Activated CD4-positive, alpha-beta memory T cell treated with anti-CD3 and anti-CD28 coated beads for 36 hours (primary cell): ENCODE measurements at regions of chr14 and their contacts with region 1.

Region 1: GRCh38 chr14:76918751-76919543 is 92.7 kb downstream of the LRRC74A start:
- DNase-seq: peak; percentile 31
- H3K4me3 Mint-ChIP-seq: no peak overlapping the region
- H3K27ac Mint-ChIP-seq: no peak overlapping the region
- H3K4me1 Mint-ChIP-seq: peaks cover 33% of the 10 kb centered on the region
- H3K27me3 Mint-ChIP-seq: no peaks in the 10 kb centered on the region

Region 2: GRCh38 chr14:76793956-76794355 is 125.0 kb before region 1 on chr14:
- CTCF ChIA-PET with region 1: no interaction called
- POLR2A ChIA-PET with region 1: no interaction called
- intact Hi-C with region 1: no loop called
- DNase-seq: no peak
- H3K4me3 Mint-ChIP-seq: no peak overlapping the region
- H3K27ac Mint-ChIP-seq: no peak overlapping the region
- H3K4me1 Mint-ChIP-seq: no peaks in the 10 kb centered on the region
- H3K27me3 Mint-ChIP-seq: no peaks in the 10 kb centered on the region

Region 3: DNA sequence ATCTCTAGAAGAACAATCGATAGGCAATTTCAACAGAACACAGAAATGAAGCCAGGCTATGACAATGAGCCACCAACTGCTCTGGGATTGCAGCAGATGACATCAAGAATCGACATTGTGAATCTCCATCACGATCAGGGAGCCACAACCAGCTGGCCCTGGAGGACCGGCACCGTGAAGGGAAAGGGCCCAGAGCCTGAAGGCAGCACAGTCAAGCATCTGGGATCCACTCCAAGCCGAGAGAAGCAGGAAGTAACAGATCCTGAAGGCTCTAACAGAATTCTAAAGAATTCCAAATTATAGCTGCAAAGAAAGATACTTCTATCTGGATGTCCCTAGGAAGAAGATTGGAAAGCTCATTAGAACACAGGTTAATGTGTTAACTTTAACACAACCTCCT is 31.8 kb before region 1 on chr14:
- CTCF ChIA-PET with region 1: interaction called, 10 read pairs
- POLR2A ChIA-PET with region 1: no interaction called
- intact Hi-C with region 1: no loop called
- DNase-seq: no peak
- H3K4me3 Mint-ChIP-seq: no peak overlapping the region
- H3K27ac Mint-ChIP-seq: no peak overlapping the region
- H3K4me1 Mint-ChIP-seq: no peaks in the 10 kb centered on the region
- H3K27me3 Mint-ChIP-seq: peaks cover 1% of the 10 kb centered on the region

Region 4: GRCh38 chr14:76941946-76942805 is 23.2 kb after region 1 on chr14:
- CTCF ChIA-PET with region 1: interaction called, 20 read pairs
- POLR2A ChIA-PET with region 1: no interaction called
- intact Hi-C with region 1: no loop called
- DNase-seq: peak; percentile 50
- H3K4me3 Mint-ChIP-seq: no peak overlapping the region
- H3K27ac Mint-ChIP-seq: peak overlapping the region; percentile 67
- H3K4me1 Mint-ChIP-seq: peaks cover 24% of the 10 kb centered on the region
- H3K27me3 Mint-ChIP-seq: no peaks in the 10 kb centered on the region

Region 5: DNA sequence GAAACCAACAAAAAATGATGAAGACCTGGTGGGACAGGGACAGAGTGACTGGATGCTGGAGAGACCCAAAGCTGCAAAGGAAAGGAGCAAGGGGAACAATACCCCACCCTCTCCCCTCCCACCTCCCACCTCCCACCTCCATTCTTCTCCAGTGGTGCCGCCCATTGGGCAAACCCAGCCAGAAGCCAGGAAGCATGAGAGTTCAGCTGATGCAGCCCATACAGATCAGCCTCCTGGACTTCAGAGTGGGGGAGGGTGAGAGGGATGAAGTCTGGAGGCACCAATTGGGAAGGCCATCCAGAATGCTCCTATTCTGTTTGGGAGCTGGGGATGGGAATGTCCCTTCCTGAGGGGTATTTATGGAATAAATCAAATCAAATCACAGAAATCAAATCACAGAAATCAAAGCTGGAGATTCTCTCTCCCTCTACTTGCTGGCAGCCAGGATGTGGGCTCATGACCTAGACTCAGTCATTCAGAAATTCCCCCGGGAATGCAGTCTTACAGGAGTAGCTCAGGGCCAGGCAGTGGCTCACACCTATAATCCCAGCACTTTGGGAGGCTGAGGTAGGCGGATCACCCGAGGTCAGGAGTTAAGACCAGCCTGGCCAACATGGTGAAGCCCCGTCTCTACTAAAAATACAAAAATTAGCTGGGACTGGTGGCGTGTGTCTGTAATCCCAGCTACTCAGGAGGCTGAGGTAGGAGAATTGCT is 78.5 kb after region 1 on chr14:
- CTCF ChIA-PET with region 1: no interaction called
- POLR2A ChIA-PET with region 1: no interaction called
- intact Hi-C with region 1: no loop called
- DNase-seq: no peak
- H3K4me3 Mint-ChIP-seq: no peak overlapping the region
- H3K27ac Mint-ChIP-seq: no peak overlapping the region
- H3K4me1 Mint-ChIP-seq: peaks cover 19% of the 10 kb centered on the region
- H3K27me3 Mint-ChIP-seq: no peaks in the 10 kb centered on the region

Region 6: DNA sequence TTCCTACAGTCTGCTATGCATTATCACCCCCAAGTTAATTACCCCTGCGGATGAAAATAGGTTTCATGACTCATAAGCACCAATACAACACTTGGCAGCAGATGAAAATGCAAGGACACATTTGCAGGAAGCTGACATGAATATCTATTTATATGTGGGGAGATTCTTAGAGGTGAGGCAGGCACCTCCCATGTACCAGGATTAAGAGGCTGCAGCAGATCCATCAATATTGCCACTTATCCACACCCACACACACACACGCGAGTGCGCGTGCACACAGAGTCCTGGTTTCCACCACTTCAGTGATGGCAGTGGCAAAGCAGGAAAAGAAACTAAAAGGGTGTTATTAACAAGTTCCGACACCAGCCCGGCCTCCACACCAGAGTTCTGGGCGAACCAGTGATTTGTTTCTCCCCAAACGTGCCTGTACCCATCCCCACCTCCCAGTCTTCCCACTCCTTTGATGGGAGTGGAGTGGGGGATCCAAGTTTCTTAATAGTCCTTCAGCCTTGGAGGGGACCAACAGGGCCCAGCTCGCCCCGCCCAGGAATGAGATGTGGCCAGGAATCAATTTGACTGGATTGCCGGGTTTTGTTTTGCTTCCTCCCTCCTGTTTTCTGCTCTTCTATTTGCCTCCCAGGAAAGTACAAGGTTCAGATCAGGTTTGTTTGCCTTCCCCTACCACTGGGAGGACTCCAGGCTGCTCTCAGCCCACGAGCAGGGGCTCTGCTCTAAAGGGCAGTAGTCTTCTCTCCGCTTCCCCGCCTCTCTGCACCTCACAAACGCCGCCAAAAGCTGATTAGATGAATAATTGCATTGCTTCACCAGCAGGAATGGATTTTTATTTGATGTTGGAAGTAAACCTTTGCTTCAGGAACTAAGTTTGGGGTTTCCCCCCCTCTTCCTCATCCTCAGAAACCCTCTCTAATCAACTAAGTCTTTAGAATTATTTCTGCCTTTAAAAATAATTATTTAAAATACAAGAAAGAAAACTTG is 104.4 kb after region 1 on chr14:
- CTCF ChIA-PET with region 1: interaction called, 37 read pairs
- POLR2A ChIA-PET with region 1: interaction called, 3 read pairs
- intact Hi-C with region 1: no loop called
- DNase-seq: peak; percentile 79
- H3K4me3 Mint-ChIP-seq: peak overlapping the region; percentile 58
- H3K27ac Mint-ChIP-seq: peak overlapping the region; percentile 87
- H3K4me1 Mint-ChIP-seq: peaks cover 44% of the 10 kb centered on the region
- H3K27me3 Mint-ChIP-seq: no peaks in the 10 kb centered on the region

Region 7: GRCh38 chr14:77076113-77076631 is 157.2 kb after region 1 on chr14:
- CTCF ChIA-PET with region 1: interaction called, 146 read pairs
- POLR2A ChIA-PET with region 1: no interaction called
- intact Hi-C with region 1: no loop called
- DNase-seq: no peak
- H3K4me3 Mint-ChIP-seq: no peak overlapping the region
- H3K27ac Mint-ChIP-seq: no peak overlapping the region
- H3K4me1 Mint-ChIP-seq: no peaks in the 10 kb centered on the region
- H3K27me3 Mint-ChIP-seq: peaks cover under 1% of the 10 kb centered on the region